Adrenal gland (tissue), 19 donors: ENCODE measurements at regions of chr18 and their contacts with region 1.

Region 1: GRCh38 chr18:21444465-21445023 is 156.0 kb downstream of the ESCO1 start:
- DNase-seq: peak in 6 of 7 donors; percentile 24 to 58 (median 34)
- H3K4me3 ChIP-seq: no peak overlapping the region
- H3K27ac ChIP-seq: no peak overlapping the region
- H3K4me1 ChIP-seq: no peaks in the 10 kb centered on the region
- H3K27me3 ChIP-seq: no peaks in the 10 kb centered on the region
- CTCF ChIP-seq: peak; percentile 41 to 68 (median 60)
- POLR2A ChIP-seq: no peak

Region 2: GRCh38 chr18:21194871-21195771 is 249.4 kb before region 1 on chr18:
- intact Hi-C with region 1: loop called (anchors 5 kb)
- DNase-seq: no peak
- H3K4me3 ChIP-seq: no peak overlapping the region
- H3K27ac ChIP-seq: no peak overlapping the region
- H3K4me1 ChIP-seq: no peaks in the 10 kb centered on the region
- H3K27me3 ChIP-seq: no peaks in the 10 kb centered on the region
- CTCF ChIP-seq: peak; percentile 63 to 77 (median 68)
- POLR2A ChIP-seq: no peak

Region 3: GRCh38 chr18:21369146-21369545 is 75.4 kb before region 1 on chr18:
- intact Hi-C with region 1: loop called in 1 of 2 experiments (anchors 10 kb)
- DNase-seq: no peak
- H3K4me3 ChIP-seq: no peak overlapping the region
- H3K27ac ChIP-seq: no peak overlapping the region
- H3K4me1 ChIP-seq: peaks cover 0 to 4% of the 10 kb centered on the region in 2 donors
- H3K27me3 ChIP-seq: no peaks in the 10 kb centered on the region
- CTCF ChIP-seq: no peak
- POLR2A ChIP-seq: no peak